ENCODE measurements at regions of chr6 and their contacts with region 1.

Region 1: GRCh38 chr6:137975188-137975940 is 108.3 kb downstream of the TNFAIP3 start:
- DNase-seq: peak in 7 of 9 donors; percentile 22 to 65 (median 51)
- ATAC-seq: peak; percentile 85
- H3K4me3 ChIP-seq: peak overlapping the region; percentile 5
- H3K4me3 Mint-ChIP-seq: peak overlapping the region; percentile 9 to 92 (median 78)
- H3K27ac ChIP-seq: peak overlapping the region; percentile 66
- H3K27ac Mint-ChIP-seq: peak overlapping the region; percentile 91 to 99 (median 94)
- H3K4me1 ChIP-seq: peaks cover 17 to 41% of the 10 kb centered on the region in 2 donors
- H3K4me1 Mint-ChIP-seq: peaks cover 23 to 55% (median 31%) of the 10 kb centered on the region in 7 donors
- H3K27me3 ChIP-seq: no peaks in the 10 kb centered on the region
- H3K27me3 Mint-ChIP-seq: no peaks in the 10 kb centered on the region

Region 2: DNA sequence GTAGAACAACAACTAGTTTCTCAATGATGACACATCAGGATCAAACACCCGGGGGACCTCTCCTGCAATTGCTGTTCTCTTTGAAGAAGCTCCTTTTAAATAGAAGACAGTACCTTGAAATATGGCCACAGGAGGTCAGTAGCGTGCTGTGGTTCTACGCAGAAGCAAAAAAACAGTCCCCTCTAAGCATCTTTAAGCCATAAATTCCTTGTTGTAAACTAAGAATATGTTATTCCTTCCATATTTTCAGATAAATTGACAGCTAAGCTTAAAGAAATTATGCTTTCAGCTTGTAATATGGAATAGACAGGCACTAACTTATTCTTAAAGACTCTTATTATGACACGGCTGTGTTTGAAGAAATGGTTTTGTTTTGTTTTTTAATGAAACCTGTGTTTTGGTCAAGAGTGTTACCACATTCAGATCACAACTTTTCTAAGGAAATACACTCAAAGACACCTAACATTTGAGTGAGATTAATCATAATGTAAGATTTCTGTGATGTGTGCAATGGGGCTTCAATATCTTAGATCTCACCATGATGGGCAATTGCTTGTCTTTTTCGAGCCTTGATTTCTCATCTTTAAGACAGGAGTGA is 880.9 kb before region 1 on chr6:
- CTCF ChIA-PET with region 1: no interaction called
- POLR2A ChIA-PET with region 1: no interaction called
- intact Hi-C with region 1: loop called in 1 of 2 experiments (anchors 10 kb)
- DNase-seq: peak in 8 of 9 donors; percentile 17 to 56 (median 40)
- ATAC-seq: peak; percentile 80
- H3K4me3 ChIP-seq: no peak overlapping the region
- H3K4me3 Mint-ChIP-seq: peak overlapping the region in 1 of 10 donors; percentile 33
- H3K27ac ChIP-seq: no peak overlapping the region
- H3K27ac Mint-ChIP-seq: peak overlapping the region in 1 of 9 donors; percentile 11
- H3K4me1 ChIP-seq: peaks cover 0 to 3% of the 10 kb centered on the region in 2 donors
- H3K4me1 Mint-ChIP-seq: peaks cover 0 to 44% (median 0%) of the 10 kb centered on the region in 7 donors
- H3K27me3 ChIP-seq: no peaks in the 10 kb centered on the region
- H3K27me3 Mint-ChIP-seq: peaks cover 0 to 10% (median 0%) of the 10 kb centered on the region in 5 donors

Region 3: GRCh38 chr6:137475103-137475502 is 500.3 kb before region 1 on chr6:
- CTCF ChIA-PET with region 1: interaction called, 3 read pairs
- POLR2A ChIA-PET with region 1: no interaction called
- intact Hi-C with region 1: loop called in 1 of 2 experiments (anchors 10 kb)
- DNase-seq: no peak
- ATAC-seq: no peak
- H3K4me3 ChIP-seq: no peak overlapping the region
- H3K4me3 Mint-ChIP-seq: no peak overlapping the region
- H3K27ac ChIP-seq: no peak overlapping the region
- H3K27ac Mint-ChIP-seq: no peak overlapping the region
- H3K4me1 ChIP-seq: no peaks in the 10 kb centered on the region
- H3K4me1 Mint-ChIP-seq: no peaks in the 10 kb centered on the region
- H3K27me3 ChIP-seq: peaks cover 0 to 4% of the 10 kb centered on the region in 2 donors
- H3K27me3 Mint-ChIP-seq: peaks cover 15 to 62% (median 27%) of the 10 kb centered on the region in 5 donors

Region 4: GRCh38 chr6:137707590-137708360 is 267.6 kb before region 1 on chr6:
- CTCF ChIA-PET with region 1: interaction called, 14 read pairs
- POLR2A ChIA-PET with region 1: no interaction called
- intact Hi-C with region 1: loop called (anchors 1 kb)
- DNase-seq: peak; percentile 44 to 94 (median 89)
- ATAC-seq: peak; percentile 86
- H3K4me3 ChIP-seq: peak overlapping the region; percentile 6
- H3K4me3 Mint-ChIP-seq: peak overlapping the region in 9 of 10 donors; percentile 38 to 82 (median 66)
- H3K27ac ChIP-seq: peak overlapping the region; percentile 79
- H3K27ac Mint-ChIP-seq: peak overlapping the region; percentile 88 to 99 (median 97)
- H3K4me1 ChIP-seq: peaks cover 26 to 37% of the 10 kb centered on the region in 2 donors
- H3K4me1 Mint-ChIP-seq: peaks cover 23 to 74% (median 40%) of the 10 kb centered on the region in 7 donors
- H3K27me3 ChIP-seq: no peaks in the 10 kb centered on the region
- H3K27me3 Mint-ChIP-seq: peaks cover 0 to 5% (median 0%) of the 10 kb centered on the region in 5 donors

Region 5: GRCh38 chr6:137728385-137729349 is 246.7 kb before region 1 on chr6:
- CTCF ChIA-PET with region 1: no interaction called
- POLR2A ChIA-PET with region 1: no interaction called
- intact Hi-C with region 1: no loop called
- DNase-seq: no peak
- ATAC-seq: peak; percentile 17
- H3K4me3 ChIP-seq: no peak overlapping the region
- H3K4me3 Mint-ChIP-seq: no peak overlapping the region
- H3K27ac ChIP-seq: no peak overlapping the region
- H3K27ac Mint-ChIP-seq: no peak overlapping the region
- H3K4me1 ChIP-seq: no peaks in the 10 kb centered on the region
- H3K4me1 Mint-ChIP-seq: peaks cover 0 to 3% (median 0%) of the 10 kb centered on the region in 7 donors
- H3K27me3 ChIP-seq: peaks cover 0 to 2% of the 10 kb centered on the region in 2 donors
- H3K27me3 Mint-ChIP-seq: peaks cover 0 to 10% (median 9%) of the 10 kb centered on the region in 5 donors

Region 6: GRCh38 chr6:137873273-137873762 is 102.0 kb before region 1 on chr6:
- CTCF ChIA-PET with region 1: interaction called, 11 read pairs
- POLR2A ChIA-PET with region 1: interaction called, 4 read pairs
- intact Hi-C with region 1: loop called in 1 of 2 experiments (anchors 1 kb)
- DNase-seq: peak in 6 of 9 donors; percentile 12 to 81 (median 37)
- ATAC-seq: peak; percentile 54
- H3K4me3 ChIP-seq: peak overlapping the region; percentile 0
- H3K4me3 Mint-ChIP-seq: peak overlapping the region; percentile 60 to 98 (median 94)
- H3K27ac ChIP-seq: peak overlapping the region; percentile 99
- H3K27ac Mint-ChIP-seq: peak overlapping the region; percentile 61 to 99 (median 94)
- H3K4me1 ChIP-seq: peaks cover 38 to 49% of the 10 kb centered on the region in 2 donors
- H3K4me1 Mint-ChIP-seq: peaks cover 53 to 91% (median 78%) of the 10 kb centered on the region in 7 donors
- H3K27me3 ChIP-seq: no peaks in the 10 kb centered on the region
- H3K27me3 Mint-ChIP-seq: no peaks in the 10 kb centered on the region

Region 7: DNA sequence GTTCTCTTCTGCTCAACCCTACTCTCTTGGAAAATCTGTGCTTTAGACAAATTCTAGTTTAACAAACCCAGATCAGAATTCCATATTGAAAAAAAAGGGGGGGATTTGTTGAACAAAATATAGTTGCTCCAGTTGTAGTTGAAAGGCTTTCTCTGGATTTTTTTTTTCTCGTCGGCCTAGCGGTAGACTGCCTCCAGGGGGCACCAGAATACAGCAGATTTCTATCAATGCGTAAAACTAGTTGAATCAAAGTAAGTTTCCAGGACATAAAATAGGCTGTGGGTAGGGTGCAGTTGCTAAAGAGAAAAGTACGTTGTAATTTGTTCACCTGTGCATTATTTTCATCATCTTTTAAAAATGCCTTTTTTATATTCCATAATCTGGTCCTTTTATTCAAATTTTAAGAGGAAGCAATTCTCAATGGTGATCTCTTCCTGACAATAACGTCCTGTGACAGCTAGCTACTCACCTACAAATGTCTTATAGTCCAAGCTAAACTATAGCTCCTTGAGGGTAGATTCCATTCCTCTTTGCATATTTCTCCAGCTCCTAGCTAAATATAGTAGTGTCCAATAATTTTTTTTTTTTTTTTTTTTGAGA is 26.5 kb after region 1 on chr6:
- CTCF ChIA-PET with region 1: no interaction called
- POLR2A ChIA-PET with region 1: no interaction called
- intact Hi-C with region 1: loop called in 1 of 2 experiments (anchors 1 kb)
- DNase-seq: peak in 8 of 9 donors; percentile 37 to 65 (median 56)
- ATAC-seq: peak; percentile 79
- H3K4me3 ChIP-seq: no peak overlapping the region
- H3K4me3 Mint-ChIP-seq: no peak overlapping the region
- H3K27ac ChIP-seq: no peak overlapping the region
- H3K27ac Mint-ChIP-seq: peak overlapping the region in 1 of 9 donors; percentile 27
- H3K4me1 ChIP-seq: no peaks in the 10 kb centered on the region
- H3K4me1 Mint-ChIP-seq: peaks cover 0 to 16% (median 5%) of the 10 kb centered on the region in 7 donors
- H3K27me3 ChIP-seq: no peaks in the 10 kb centered on the region
- H3K27me3 Mint-ChIP-seq: peaks cover 0 to 11% (median 0%) of the 10 kb centered on the region in 5 donors